ENCODE measurements at regions of chr1 and their contacts with region 1.

Region 1: DNA sequence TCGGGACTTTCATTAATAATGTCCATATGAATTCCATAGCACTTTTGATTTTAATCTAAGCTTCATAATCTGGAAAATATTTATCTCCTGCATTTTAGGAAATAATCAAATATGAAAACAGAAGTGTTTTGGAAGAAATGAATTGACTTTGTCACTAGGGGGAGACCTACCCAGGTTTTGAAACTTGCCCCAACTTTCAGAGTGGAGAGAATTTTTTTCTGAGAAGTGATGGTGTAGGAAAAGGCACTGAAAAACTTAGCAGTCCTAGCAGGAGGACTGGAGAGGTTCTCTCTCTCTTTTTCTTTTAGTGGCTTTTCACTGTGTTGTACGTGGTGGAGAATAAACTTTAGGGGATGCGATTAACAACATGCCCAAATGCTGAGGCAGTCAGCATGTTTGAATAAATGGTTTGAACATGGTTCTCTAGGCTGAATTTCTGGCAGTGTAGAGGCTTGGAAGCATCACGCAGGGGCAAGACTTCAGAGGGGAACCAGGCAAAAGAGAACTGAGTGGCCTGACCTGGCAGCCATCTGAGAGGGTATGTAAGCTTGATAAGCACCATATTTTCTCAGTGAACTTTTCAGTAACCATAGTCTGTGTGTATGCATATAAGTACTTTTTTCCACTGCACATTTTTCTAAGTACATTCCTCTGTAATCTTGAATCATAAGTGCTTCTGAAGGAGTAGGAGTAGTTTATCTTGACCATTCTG is 68.3 kb upstream of the NEK7 start:
- DNase-seq: peak; percentile 68
- H3K4me3 Mint-ChIP-seq: no peak overlapping the region
- H3K27ac Mint-ChIP-seq: no peak overlapping the region
- H3K4me1 Mint-ChIP-seq: peaks cover 6% of the 10 kb centered on the region
- H3K27me3 Mint-ChIP-seq: peaks cover 3% of the 10 kb centered on the region

Region 2: GRCh38 chr1:198359024-198359653 is 270.6 kb after region 1 on chr1:
- intact Hi-C with region 1: loop called (anchors 1 kb)
- DNase-seq: no peak
- H3K4me3 Mint-ChIP-seq: no peak overlapping the region
- H3K27ac Mint-ChIP-seq: no peak overlapping the region
- H3K4me1 Mint-ChIP-seq: no peaks in the 10 kb centered on the region
- H3K27me3 Mint-ChIP-seq: peaks cover 8% of the 10 kb centered on the region

Region 3: GRCh38 chr1:198699167-198700015 is 610.9 kb after region 1 on chr1:
- intact Hi-C with region 1: loop called (anchors 10 kb)
- DNase-seq: peak; percentile 86
- H3K4me3 Mint-ChIP-seq: peak overlapping the region; percentile 41
- H3K27ac Mint-ChIP-seq: peak overlapping the region; percentile 83
- H3K4me1 Mint-ChIP-seq: peaks cover 68% of the 10 kb centered on the region
- H3K27me3 Mint-ChIP-seq: no peaks in the 10 kb centered on the region

Region 4: GRCh38 chr1:198756470-198756869 is 668.0 kb after region 1 on chr1:
- intact Hi-C with region 1: no loop called
- DNase-seq: no peak
- H3K4me3 Mint-ChIP-seq: no peak overlapping the region
- H3K27ac Mint-ChIP-seq: no peak overlapping the region
- H3K4me1 Mint-ChIP-seq: peaks cover 7% of the 10 kb centered on the region
- H3K27me3 Mint-ChIP-seq: no peaks in the 10 kb centered on the region